Natural killer cell (primary cell): ENCODE measurements at regions of chr12 and their contacts with region 1.

Region 1: GRCh38 chr12:47391566-47391965 is 311.8 kb upstream of the AMIGO2 start:
- DNase-seq: peak; percentile 60 to 86
- ATAC-seq: peak; percentile 80 to 90 (median 89)
- H3K4me3 ChIP-seq: no peak overlapping the region
- H3K4me3 Mint-ChIP-seq: peak overlapping the region; percentile 82
- H3K27ac ChIP-seq: peak overlapping the region; percentile 70
- H3K27ac Mint-ChIP-seq: peak overlapping the region; percentile 89 to 95
- H3K4me1 ChIP-seq: peaks cover 29% of the 10 kb centered on the region
- H3K4me1 Mint-ChIP-seq: peaks cover 42 to 46% of the 10 kb centered on the region in 2 donors
- H3K27me3 ChIP-seq: no peaks in the 10 kb centered on the region
- H3K27me3 Mint-ChIP-seq: no peaks in the 10 kb centered on the region
- CTCF ChIP-seq: no peak

Region 2: GRCh38 chr12:46217541-46218321 is 1173.8 kb before region 1 on chr12:
- intact Hi-C with region 1: loop called (anchors 1 kb)
- DNase-seq: peak; percentile 57 to 85
- ATAC-seq: peak; percentile 11 to 55 (median 32)
- H3K4me3 ChIP-seq: peak overlapping the region; percentile 8
- H3K4me3 Mint-ChIP-seq: peak overlapping the region; percentile 85
- H3K27ac ChIP-seq: peak overlapping the region; percentile 87
- H3K27ac Mint-ChIP-seq: peak overlapping the region; percentile 97 to 98
- H3K4me1 ChIP-seq: peaks cover 54% of the 10 kb centered on the region
- H3K4me1 Mint-ChIP-seq: peaks cover 90 to 97% of the 10 kb centered on the region in 2 donors
- H3K27me3 ChIP-seq: no peaks in the 10 kb centered on the region
- H3K27me3 Mint-ChIP-seq: no peaks in the 10 kb centered on the region
- CTCF ChIP-seq: no peak

Region 3: GRCh38 chr12:47079468-47079980 is 312.0 kb before region 1 on chr12 and contains the starts of genes AMIGO2 and PCED1B:
- intact Hi-C with region 1: loop called (anchors 1 kb)
- DNase-seq: peak; percentile 47 to 73
- ATAC-seq: peak; percentile 47 to 67 (median 60)
- H3K4me3 ChIP-seq: peak within 1 kb of the TSS; percentile 94
- H3K4me3 Mint-ChIP-seq: peak within 1 kb of the TSS; percentile 100
- H3K27ac ChIP-seq: peak within 1 kb of the TSS; percentile 74
- H3K27ac Mint-ChIP-seq: peak within 1 kb of the TSS; percentile 82 to 95
- H3K4me1 ChIP-seq: peaks cover 18% of the 10 kb centered on the region
- H3K4me1 Mint-ChIP-seq: peaks cover 54% of the 10 kb centered on the region in 2 donors
- H3K27me3 ChIP-seq: no peaks in the 10 kb centered on the region
- H3K27me3 Mint-ChIP-seq: no peaks in the 10 kb centered on the region
- CTCF ChIP-seq: no peak
- total RNA-seq, gene AMIGO2: 8.0 to 9.9 (median 8.1) TPM
- total RNA-seq, gene PCED1B: 30.2 to 35.9 (median 33.3) TPM

Region 4: GRCh38 chr12:47317175-47317915 is 74.2 kb before region 1 on chr12:
- intact Hi-C with region 1: loop called (anchors 5 kb)
- DNase-seq: peak in 1 of 2 donors; percentile 52
- ATAC-seq: peak; percentile 72 to 88 (median 77)
- H3K4me3 ChIP-seq: peak overlapping the region; percentile 42
- H3K4me3 Mint-ChIP-seq: peak overlapping the region; percentile 72
- H3K27ac ChIP-seq: peak overlapping the region; percentile 65
- H3K27ac Mint-ChIP-seq: peak overlapping the region; percentile 69 to 81
- H3K4me1 ChIP-seq: peaks cover 18% of the 10 kb centered on the region
- H3K4me1 Mint-ChIP-seq: peaks cover 26 to 29% of the 10 kb centered on the region in 2 donors
- H3K27me3 ChIP-seq: no peaks in the 10 kb centered on the region
- H3K27me3 Mint-ChIP-seq: no peaks in the 10 kb centered on the region
- CTCF ChIP-seq: no peak

Region 5: DNA sequence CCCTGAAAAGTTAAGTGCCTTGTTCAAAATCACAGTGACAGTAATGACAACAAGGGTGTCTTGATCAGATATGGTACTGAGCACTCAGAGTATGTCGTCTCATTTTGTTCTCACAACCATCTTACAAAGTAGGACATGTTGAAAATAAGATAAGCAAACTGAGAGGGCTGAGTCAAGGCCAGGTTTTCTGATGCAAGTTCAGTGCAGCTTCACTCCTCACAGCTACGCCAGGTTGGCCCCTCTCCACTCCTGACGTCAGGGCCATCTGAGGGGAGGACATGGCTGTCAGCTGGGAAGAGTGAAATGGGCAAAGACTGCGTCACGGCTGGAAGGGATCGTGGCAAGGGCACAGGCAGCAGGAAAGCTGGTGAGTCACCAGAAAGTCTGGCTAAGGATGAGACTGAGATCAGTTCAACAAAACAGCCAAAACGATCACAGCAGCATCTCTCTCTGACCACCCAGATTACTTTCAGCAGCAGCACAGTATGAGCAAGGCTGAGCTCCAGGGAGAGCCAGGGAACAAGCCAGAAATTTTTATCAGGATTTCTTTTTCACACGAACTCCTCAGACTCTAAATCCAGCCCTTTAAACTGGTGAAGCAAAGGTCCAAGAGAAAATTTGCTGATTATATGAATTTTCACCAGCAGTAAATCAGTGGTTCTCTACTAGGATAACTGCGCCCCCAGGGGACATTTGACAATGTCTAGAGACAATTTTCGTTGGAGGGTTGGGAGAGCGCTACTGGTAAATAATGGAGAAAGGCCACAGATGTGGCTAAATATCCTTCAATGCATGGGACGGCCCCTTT is 13.9 kb before region 1 on chr12:
- intact Hi-C with region 1: no loop called
- DNase-seq: no peak
- ATAC-seq: no peak
- H3K4me3 ChIP-seq: no peak overlapping the region
- H3K4me3 Mint-ChIP-seq: no peak overlapping the region
- H3K27ac ChIP-seq: no peak overlapping the region
- H3K27ac Mint-ChIP-seq: no peak overlapping the region
- H3K4me1 ChIP-seq: no peaks in the 10 kb centered on the region
- H3K4me1 Mint-ChIP-seq: peaks cover 15 to 20% of the 10 kb centered on the region in 2 donors
- H3K27me3 ChIP-seq: no peaks in the 10 kb centered on the region
- H3K27me3 Mint-ChIP-seq: no peaks in the 10 kb centered on the region
- CTCF ChIP-seq: no peak